ENCODE measurements at regions of chr10 and their contacts with region 1.

Region 1: GRCh38 chr10:53314876-53315275 is 542.3 kb upstream of the MBL2 start:
- DNase-seq: no peak
- ATAC-seq: no peak
- H3K4me3 ChIP-seq: no peak overlapping the region
- H3K27ac ChIP-seq: no peak overlapping the region
- H3K4me1 ChIP-seq: no peaks in the 10 kb centered on the region
- H3K27me3 ChIP-seq: no peaks in the 10 kb centered on the region
- CTCF ChIP-seq: no peak

Region 2: GRCh38 chr10:52172581-52172980 is 1142.3 kb before region 1 on chr10:
- intact Hi-C with region 1: loop called in 1 of 10 experiments (anchors 5 kb)
- DNase-seq: no peak
- ATAC-seq: peak in 1 of 8 donors; percentile 31
- H3K4me3 ChIP-seq: no peak overlapping the region
- H3K27ac ChIP-seq: no peak overlapping the region
- H3K4me1 ChIP-seq: peaks cover 0 to 4% (median 0%) of the 10 kb centered on the region in 9 donors
- H3K27me3 ChIP-seq: no peaks in the 10 kb centered on the region
- CTCF ChIP-seq: peak in 3 of 9 donors; percentile 15 to 29 (median 25)

Region 3: GRCh38 chr10:53356616-53357349 is 41.9 kb after region 1 on chr10:
- intact Hi-C with region 1: no loop called
- DNase-seq: no peak
- ATAC-seq: no peak
- H3K4me3 ChIP-seq: no peak overlapping the region
- H3K27ac ChIP-seq: no peak overlapping the region
- H3K4me1 ChIP-seq: no peaks in the 10 kb centered on the region
- H3K27me3 ChIP-seq: peaks cover 0 to 2% (median 0%) of the 10 kb centered on the region in 7 donors
- CTCF ChIP-seq: no peak

Measured in heart right ventricle (tissue), 16 donors.